ENCODE measurements at regions of chr7 and their contacts with region 1.

Region 1: DNA sequence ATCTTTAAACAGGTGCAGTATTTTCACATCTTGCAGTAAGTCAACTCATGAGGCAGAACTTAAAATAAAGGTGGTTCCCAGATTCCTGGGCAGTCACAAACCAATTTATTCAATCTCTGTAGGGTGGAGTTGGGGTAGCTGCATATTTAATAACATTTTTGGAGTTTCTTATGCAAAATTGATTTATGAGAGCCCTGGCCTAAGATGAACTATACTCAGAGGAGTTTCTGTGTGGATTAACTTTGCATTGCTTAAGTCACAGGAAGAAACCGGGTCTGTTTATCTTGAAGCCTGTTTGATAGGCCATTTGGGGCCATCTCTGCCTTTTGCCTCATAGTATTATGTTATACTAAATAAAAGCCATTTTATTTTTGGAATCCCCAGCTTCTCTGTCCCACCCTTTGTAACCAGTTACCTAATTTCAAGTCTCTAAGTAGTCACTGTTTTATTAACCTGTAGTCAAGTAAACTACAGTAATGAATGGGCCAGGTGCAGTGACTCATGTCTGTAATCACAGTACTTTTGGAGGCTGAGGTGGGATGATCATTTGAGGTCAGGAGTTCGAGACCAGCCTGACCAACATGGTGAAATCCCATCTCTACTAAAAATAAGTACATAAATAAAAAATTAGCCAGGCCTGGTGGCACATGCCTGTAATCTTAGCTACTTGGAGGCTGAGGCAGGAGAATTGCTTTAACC is 104.4 kb upstream of the FAM3C start:
- DNase-seq: no peak
- H3K4me3 Mint-ChIP-seq: no peak overlapping the region
- H3K27ac Mint-ChIP-seq: peak overlapping the region; percentile 94
- H3K4me1 Mint-ChIP-seq: peaks cover 26% of the 10 kb centered on the region
- H3K27me3 Mint-ChIP-seq: no peaks in the 10 kb centered on the region

Region 2: GRCh38 chr7:121366852-121367431 is 133.6 kb before region 1 on chr7:
- intact Hi-C with region 1: loop called (anchors 1 kb)
- DNase-seq: peak; percentile 74
- H3K4me3 Mint-ChIP-seq: no peak overlapping the region
- H3K27ac Mint-ChIP-seq: peak overlapping the region; percentile 59
- H3K4me1 Mint-ChIP-seq: peaks cover 39% of the 10 kb centered on the region
- H3K27me3 Mint-ChIP-seq: no peaks in the 10 kb centered on the region

Region 3: DNA sequence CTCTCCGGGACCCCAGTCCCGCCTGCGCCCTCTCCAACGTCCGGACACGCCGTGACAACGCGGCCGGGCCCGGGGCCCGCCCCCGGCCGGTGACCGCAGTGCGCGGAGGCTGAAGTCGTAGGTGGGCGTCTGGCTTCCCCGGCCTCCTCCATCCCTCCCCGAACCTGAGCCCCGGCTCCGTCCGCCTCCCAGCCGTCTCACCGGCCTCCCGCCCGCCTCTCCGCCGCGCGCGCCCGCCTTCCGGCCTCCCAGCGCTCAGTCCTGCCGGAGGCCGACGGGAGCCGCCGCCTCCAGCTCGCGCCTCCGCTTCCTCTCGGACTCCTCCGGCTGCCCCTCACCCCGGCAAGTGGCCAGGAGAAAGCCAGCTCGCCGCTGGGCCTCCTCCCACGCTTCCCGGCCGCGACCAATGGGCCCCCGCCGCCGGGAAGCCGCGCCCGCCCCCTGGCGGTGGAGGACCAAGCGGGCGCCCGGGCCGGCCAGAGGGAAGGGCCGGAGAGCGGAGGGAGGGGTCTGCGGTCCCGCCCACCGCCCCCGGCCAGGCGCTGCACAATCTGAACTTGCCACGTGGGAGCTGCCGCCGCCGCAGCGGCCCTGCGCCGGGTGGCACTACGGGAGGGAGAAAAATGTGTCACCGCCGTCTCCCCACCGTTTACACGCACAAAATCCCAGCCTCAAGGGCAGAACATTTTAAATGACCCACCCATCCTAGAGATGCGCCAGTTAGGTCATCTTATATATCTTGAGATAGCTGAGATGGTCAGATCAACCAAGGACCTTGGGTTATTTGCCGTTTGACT is 104.3 kb before region 1 on chr7 and contains the start of gene FAM3C:
- intact Hi-C with region 1: loop called (anchors 1 kb)
- DNase-seq: peak; percentile 95
- H3K4me3 Mint-ChIP-seq: peak within 1 kb of the TSS; percentile 88
- H3K27ac Mint-ChIP-seq: peak within 1 kb of the TSS; percentile 96
- H3K4me1 Mint-ChIP-seq: peaks cover 33% of the 10 kb centered on the region
- H3K27me3 Mint-ChIP-seq: no peaks in the 10 kb centered on the region
- total RNA-seq, gene FAM3C: 77.5 and 80.2 TPM in 2 replicates

Region 4: DNA sequence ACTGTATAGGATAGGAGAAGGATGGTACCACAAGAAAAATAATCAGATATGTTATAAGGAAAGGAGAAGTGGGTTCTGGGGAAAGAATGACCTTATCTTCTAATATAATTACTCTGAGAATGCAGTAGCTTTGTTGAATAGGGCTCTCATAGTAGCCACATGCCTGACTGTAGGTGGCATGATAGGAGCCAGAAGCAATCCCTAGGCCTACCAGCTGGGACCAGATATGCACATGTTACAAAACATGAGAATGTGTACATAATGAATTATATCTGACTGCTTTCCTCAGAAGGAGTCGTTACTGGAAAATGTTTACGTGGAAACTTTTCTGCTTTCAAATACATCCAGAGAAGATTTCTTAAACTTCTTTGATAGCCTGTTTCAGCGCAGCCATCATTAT is 51.2 kb before region 1 on chr7:
- intact Hi-C with region 1: no loop called
- DNase-seq: peak; percentile 34
- H3K4me3 Mint-ChIP-seq: no peak overlapping the region
- H3K27ac Mint-ChIP-seq: no peak overlapping the region
- H3K4me1 Mint-ChIP-seq: peaks cover 2% of the 10 kb centered on the region
- H3K27me3 Mint-ChIP-seq: peaks cover under 1% of the 10 kb centered on the region

Region 5: GRCh38 chr7:121515630-121516401 is 15.3 kb after region 1 on chr7:
- intact Hi-C with region 1: loop called (anchors 2 kb)
- DNase-seq: no peak
- H3K4me3 Mint-ChIP-seq: no peak overlapping the region
- H3K27ac Mint-ChIP-seq: no peak overlapping the region
- H3K4me1 Mint-ChIP-seq: peaks cover 18% of the 10 kb centered on the region
- H3K27me3 Mint-ChIP-seq: no peaks in the 10 kb centered on the region

Region 6: GRCh38 chr7:121558288-121558687 is 57.8 kb after region 1 on chr7:
- intact Hi-C with region 1: no loop called
- DNase-seq: peak; percentile 37
- H3K4me3 Mint-ChIP-seq: no peak overlapping the region
- H3K27ac Mint-ChIP-seq: no peak overlapping the region
- H3K4me1 Mint-ChIP-seq: no peaks in the 10 kb centered on the region
- H3K27me3 Mint-ChIP-seq: peaks cover 19% of the 10 kb centered on the region